ENCODE measurements at regions of chr3 and their contacts with region 1.

Region 1: DNA sequence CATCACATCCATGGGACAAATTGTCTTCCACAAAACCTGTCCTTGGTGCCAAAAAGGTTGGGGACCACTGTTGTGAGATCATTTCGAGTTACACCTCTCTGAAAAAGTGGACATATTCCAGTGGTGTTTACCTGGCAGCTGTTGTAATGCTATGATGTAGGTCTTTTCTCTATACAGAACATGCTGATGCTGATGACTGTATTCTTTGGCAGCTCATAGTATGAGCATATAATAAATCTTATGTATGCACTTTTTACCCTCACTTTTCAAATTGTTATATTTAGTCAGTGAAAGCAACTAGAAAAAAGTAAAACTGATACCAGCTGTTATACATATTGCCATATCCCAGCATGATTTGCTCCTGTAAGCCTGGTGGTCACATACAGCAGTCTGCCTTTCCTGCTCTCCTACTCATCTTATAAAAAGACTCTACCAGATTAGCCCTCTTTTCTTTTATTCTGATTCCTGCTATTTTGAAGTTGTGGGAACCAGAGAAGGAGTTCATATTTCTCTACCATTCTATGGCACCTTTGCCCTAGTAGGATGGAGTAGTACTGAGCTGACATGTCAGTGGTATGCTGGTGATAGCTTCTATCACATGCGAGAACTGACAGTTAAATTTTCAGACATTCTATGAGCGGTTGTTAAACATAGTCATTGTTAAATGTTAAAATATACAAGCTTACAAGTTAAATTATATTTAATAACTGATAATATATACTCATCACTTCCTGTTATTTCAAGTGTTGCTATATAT is 128.7 kb downstream of the FNDC3B start:
- DNase-seq: no peak
- H3K4me3 ChIP-seq: no peak overlapping the region
- H3K27me3 ChIP-seq: no peaks in the 10 kb centered on the region
- CTCF ChIP-seq: no peak

Region 2: GRCh38 chr3:172194702-172195406 is 26.8 kb after region 1 on chr3:
- CTCF ChIA-PET with region 1: interaction called, 3 read pairs
- POLR2A ChIA-PET with region 1: interaction called, 10 read pairs
- DNase-seq: no peak
- H3K4me3 ChIP-seq: no peak overlapping the region
- H3K27me3 ChIP-seq: no peaks in the 10 kb centered on the region
- CTCF ChIP-seq: no peak

Region 3: DNA sequence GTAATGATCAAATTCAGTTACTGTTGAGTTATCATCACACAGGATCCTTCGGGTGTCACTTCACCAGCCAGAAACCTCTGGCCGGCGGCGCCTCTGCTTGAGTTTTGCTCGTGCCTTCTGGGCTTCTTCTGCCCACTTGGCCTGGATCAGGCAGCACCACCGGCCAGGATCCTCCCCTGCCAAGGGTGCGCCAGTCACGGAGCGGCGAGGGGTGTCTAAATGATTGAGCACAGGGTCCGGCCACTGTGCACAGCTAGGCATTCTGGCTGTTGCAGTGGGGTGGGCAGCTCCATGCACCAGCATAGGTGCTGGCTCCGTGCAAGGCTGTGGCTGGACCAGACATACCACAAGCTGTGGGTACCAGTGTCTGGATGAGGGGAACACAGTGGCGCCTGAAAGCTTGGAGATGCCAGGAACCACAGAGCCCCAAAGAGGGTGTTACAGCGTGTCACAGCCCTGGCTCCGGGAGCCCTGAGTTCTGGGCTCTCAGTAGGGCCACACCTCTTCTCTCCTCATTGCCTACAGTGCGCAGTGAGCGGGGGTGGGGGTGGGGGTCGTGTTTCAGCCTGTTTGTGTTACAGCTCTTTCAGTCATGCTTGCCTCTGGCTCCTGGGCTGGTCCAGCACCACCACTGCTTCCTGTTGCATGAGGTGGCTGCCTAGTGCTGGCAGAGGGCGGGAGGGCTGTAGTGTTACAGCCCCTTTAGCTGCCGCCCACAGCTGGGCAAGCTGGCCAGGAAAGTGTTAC is 40.7 kb after region 1 on chr3:
- CTCF ChIA-PET with region 1: no interaction called
- POLR2A ChIA-PET with region 1: no interaction called
- DNase-seq: no peak
- H3K4me3 ChIP-seq: no peak overlapping the region
- H3K27me3 ChIP-seq: no peaks in the 10 kb centered on the region
- CTCF ChIP-seq: no peak

Measured in BJ (cell line).